Tibial artery (tissue), 4 donors: ENCODE measurements at regions of chr3 and their contacts with region 1.

Region 1: DNA sequence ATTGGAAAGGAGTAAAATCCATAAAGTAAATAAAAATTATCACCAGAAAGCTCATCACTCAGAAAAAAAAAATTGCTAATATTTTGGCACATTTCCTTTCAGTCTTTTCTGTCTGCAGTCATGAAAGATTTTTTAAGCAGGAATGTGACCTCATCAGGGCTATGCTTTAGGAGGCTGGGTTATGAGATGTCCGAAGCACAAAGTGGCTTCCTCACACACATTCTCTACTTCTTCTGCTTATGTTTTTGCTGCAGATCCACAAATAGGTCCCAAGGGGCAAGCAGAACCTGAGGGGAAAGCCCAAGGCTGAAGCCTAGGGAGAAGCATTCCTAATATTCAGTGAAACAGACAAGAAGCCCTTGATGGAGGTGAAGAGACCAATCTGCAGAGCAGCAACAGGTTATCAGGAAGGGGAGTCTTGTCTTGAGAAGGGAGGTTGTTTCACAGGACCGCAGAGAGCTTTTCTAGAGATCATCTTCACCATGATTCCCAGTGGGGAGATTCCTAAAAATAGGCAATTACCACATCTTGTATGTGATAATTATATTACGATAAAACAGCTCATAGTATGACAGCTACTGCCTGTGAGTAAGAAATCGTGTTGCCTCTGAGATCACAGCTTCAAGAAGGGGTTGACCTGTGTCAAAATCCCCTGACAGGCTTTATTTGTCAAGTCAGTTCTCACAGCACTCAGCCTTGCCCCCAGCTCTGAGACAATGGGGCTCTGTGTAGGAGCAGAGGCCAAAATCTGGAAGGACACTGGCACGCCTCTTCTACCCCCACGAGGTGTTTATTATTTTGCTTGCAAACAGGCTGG is 60.5 kb downstream of the IGF2BP2 start:
- DNase-seq: no peak
- H3K4me3 ChIP-seq: peak overlapping the region in 1 of 2 donors; percentile 8
- H3K27ac ChIP-seq: peak overlapping the region; percentile 23 to 42
- H3K4me1 ChIP-seq: peaks cover 0 to 21% (median 6%) of the 10 kb centered on the region in 4 donors
- H3K27me3 ChIP-seq: peaks cover 0 to 11% of the 10 kb centered on the region in 2 donors
- CTCF ChIP-seq: no peak

Region 2: DNA sequence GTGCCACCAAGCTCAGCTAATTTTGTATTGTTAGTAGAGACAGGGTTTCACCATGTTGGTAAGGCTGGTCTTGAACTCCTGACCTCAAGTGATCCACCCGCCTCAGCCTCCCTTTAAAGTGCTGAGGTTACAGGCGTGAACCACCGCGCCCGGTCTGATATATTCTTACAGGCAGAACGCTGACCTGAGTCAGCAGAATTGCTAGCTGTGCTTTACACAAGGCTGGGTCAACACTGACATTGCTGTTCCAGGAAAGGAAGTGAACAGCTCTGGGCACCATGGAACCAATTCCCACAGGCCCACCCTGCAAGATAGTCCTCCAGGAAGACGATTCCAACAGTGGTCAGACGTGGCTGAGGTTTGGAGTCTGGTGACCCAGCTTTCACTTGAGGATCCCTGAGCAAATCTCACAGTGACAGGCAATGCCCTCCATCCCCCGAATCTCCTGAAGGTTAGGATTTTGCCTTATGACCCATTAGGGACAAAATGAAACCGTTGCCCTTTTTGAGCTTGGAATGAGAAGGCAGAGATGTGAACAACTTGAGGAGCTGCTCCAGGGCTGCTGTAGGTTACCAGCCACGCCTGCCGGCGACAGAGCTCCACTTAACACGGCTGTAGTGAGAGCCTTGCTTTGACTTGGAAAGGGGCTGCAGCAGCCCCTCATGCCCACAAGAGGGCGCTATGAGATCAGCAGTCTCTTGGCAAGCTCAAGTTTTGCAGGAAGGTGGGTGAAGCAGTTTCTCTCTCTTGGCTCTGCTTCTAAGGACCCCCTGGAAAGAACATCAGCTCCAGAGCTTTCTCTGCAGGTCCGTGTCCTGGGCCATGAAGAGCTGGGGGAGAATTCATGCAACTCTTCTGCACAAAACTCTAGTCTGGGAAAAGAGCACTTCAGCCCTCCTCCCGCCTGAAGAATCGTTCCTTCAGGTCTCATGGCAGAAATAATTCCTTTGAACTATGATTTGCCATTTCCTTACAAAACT is 104.1 kb before region 1 on chr3:
- intact Hi-C with region 1: loop called (anchors 2 kb)
- DNase-seq: peak; percentile 74 to 86
- H3K4me3 ChIP-seq: no peak overlapping the region
- H3K27ac ChIP-seq: peak overlapping the region; percentile 81 to 84
- H3K4me1 ChIP-seq: peaks cover 9 to 54% (median 45%) of the 10 kb centered on the region in 4 donors
- H3K27me3 ChIP-seq: peaks cover 0 to 3% of the 10 kb centered on the region in 2 donors
- CTCF ChIP-seq: peak; percentile 87 to 97